Caco-2 (cell line): ENCODE measurements at regions of chr6 and their contacts with region 1.

Region 1: GRCh38 chr6:92122746-92123145 is 1296.6 kb downstream of the EPHA7 start:
- DNase-seq: no peak
- H3K4me3 ChIP-seq: no peak overlapping the region
- H3K4me3 Mint-ChIP-seq: no peak overlapping the region
- H3K27ac Mint-ChIP-seq: no peak overlapping the region
- H3K4me1 ChIP-seq: peaks cover 13% of the 10 kb centered on the region
- H3K4me1 Mint-ChIP-seq: peaks cover 12% of the 10 kb centered on the region
- H3K27me3 ChIP-seq: no peaks in the 10 kb centered on the region
- H3K27me3 Mint-ChIP-seq: peaks cover 3% of the 10 kb centered on the region
- CTCF ChIP-seq: peak; percentile 33 to 50

Region 2: DNA sequence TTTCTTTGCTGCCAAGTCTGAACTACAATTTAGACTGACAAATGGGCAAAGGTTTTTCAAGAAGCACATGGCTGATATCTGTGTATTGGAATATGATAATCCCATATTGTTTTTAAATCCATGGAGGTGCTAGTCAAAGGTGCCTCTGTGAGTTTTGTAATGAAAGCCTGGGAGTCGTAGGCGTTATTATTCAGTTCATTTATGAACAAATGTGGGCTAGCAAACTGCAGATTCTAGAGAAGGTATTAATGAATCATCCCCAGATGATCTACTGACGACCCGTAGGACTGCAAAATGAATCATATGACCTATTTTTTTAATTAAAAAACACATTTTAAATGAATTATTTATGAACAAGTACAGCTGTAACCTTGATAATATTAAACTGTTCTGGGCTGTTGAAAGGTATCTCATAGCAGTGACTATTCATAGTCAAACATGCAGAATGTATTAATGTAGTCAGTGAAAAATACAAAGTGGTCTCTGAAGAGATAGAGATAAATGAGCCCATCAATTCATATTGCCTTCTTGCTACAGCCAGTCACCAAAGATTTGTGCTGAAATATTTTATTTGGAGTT is 218.1 kb before region 1 on chr6:
- CTCF ChIA-PET with region 1: no interaction called
- POLR2A ChIA-PET with region 1: no interaction called
- intact Hi-C with region 1: no loop called
- DNase-seq: no peak
- H3K4me3 ChIP-seq: no peak overlapping the region
- H3K4me3 Mint-ChIP-seq: no peak overlapping the region
- H3K27ac Mint-ChIP-seq: no peak overlapping the region
- H3K4me1 ChIP-seq: no peaks in the 10 kb centered on the region
- H3K4me1 Mint-ChIP-seq: no peaks in the 10 kb centered on the region
- H3K27me3 ChIP-seq: no peaks in the 10 kb centered on the region
- H3K27me3 Mint-ChIP-seq: no peaks in the 10 kb centered on the region
- CTCF ChIP-seq: no peak

Region 3: DNA sequence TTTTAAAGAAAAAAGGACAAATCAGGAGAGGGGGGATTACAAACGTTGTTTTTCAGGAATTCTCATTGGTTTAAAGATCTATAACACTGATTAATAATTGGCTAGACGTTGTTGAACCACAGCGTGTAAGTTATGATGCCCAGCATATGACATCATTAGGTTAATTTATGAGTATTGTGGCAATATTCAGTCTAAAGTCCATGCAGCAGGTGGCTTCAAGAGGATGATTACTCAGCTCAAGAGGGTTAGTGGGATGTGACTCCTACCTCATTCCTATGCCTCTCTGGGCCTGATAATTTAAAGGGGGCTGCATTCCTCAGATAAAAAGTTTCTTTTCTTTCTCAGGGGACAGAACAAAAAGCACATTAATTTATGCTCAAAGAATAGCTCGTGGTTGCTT is 12.3 kb before region 1 on chr6:
- CTCF ChIA-PET with region 1: no interaction called
- POLR2A ChIA-PET with region 1: no interaction called
- intact Hi-C with region 1: loop called (anchors 1 kb)
- DNase-seq: no peak
- H3K4me3 ChIP-seq: no peak overlapping the region
- H3K4me3 Mint-ChIP-seq: no peak overlapping the region
- H3K27ac Mint-ChIP-seq: no peak overlapping the region
- H3K4me1 ChIP-seq: peaks cover 7% of the 10 kb centered on the region; the same call in 1 of the 2 replicates
- H3K4me1 Mint-ChIP-seq: no peaks in the 10 kb centered on the region
- H3K27me3 ChIP-seq: no peaks in the 10 kb centered on the region
- H3K27me3 Mint-ChIP-seq: no peaks in the 10 kb centered on the region
- CTCF ChIP-seq: no peak

Region 4: GRCh38 chr6:92159046-92159445 is 36.3 kb after region 1 on chr6:
- CTCF ChIA-PET with region 1: no interaction called
- POLR2A ChIA-PET with region 1: no interaction called
- intact Hi-C with region 1: loop called (anchors 2 kb)
- DNase-seq: no peak
- H3K4me3 ChIP-seq: no peak overlapping the region
- H3K4me3 Mint-ChIP-seq: no peak overlapping the region
- H3K27ac Mint-ChIP-seq: no peak overlapping the region
- H3K4me1 ChIP-seq: no peaks in the 10 kb centered on the region
- H3K4me1 Mint-ChIP-seq: no peaks in the 10 kb centered on the region
- H3K27me3 ChIP-seq: no peaks in the 10 kb centered on the region
- H3K27me3 Mint-ChIP-seq: peaks cover 2% of the 10 kb centered on the region
- CTCF ChIP-seq: peak; percentile 14 to 32

Region 5: GRCh38 chr6:92196325-92196724 is 73.6 kb after region 1 on chr6:
- CTCF ChIA-PET with region 1: no interaction called
- POLR2A ChIA-PET with region 1: no interaction called
- intact Hi-C with region 1: loop called (anchors 2 kb)
- DNase-seq: no peak
- H3K4me3 ChIP-seq: no peak overlapping the region
- H3K4me3 Mint-ChIP-seq: no peak overlapping the region
- H3K27ac Mint-ChIP-seq: no peak overlapping the region
- H3K4me1 ChIP-seq: no peaks in the 10 kb centered on the region
- H3K4me1 Mint-ChIP-seq: no peaks in the 10 kb centered on the region
- H3K27me3 ChIP-seq: no peaks in the 10 kb centered on the region
- H3K27me3 Mint-ChIP-seq: no peaks in the 10 kb centered on the region
- CTCF ChIP-seq: no peak

Region 6: DNA sequence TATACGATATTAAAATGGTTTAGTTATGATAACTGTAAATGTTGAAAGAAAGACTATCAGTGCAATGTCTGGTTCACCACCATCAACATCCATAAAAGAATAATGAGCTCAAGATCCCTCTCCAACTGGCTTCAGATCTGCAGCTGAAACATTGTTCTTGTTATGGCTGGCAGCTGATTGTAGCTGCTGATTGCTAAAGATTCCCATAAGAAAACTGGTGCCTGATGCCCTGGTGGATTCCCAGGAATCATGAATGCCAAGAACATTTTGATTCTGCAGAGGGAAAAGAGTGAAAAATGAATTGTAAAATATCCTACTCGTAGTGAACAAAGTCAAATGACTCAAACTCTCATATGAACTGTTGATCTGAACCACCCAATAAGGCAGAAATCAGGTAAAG is 136.4 kb after region 1 on chr6:
- CTCF ChIA-PET with region 1: no interaction called
- POLR2A ChIA-PET with region 1: no interaction called
- intact Hi-C with region 1: loop called (anchors 10 kb)
- DNase-seq: no peak
- H3K4me3 ChIP-seq: no peak overlapping the region
- H3K4me3 Mint-ChIP-seq: no peak overlapping the region
- H3K27ac Mint-ChIP-seq: no peak overlapping the region
- H3K4me1 ChIP-seq: no peaks in the 10 kb centered on the region
- H3K4me1 Mint-ChIP-seq: no peaks in the 10 kb centered on the region
- H3K27me3 ChIP-seq: no peaks in the 10 kb centered on the region
- H3K27me3 Mint-ChIP-seq: peaks cover 6% of the 10 kb centered on the region
- CTCF ChIP-seq: no peak

Region 7: GRCh38 chr6:92647625-92648024 is 524.9 kb after region 1 on chr6:
- CTCF ChIA-PET with region 1: no interaction called
- POLR2A ChIA-PET with region 1: no interaction called
- intact Hi-C with region 1: loop called (anchors 10 kb)
- DNase-seq: no peak
- H3K4me3 ChIP-seq: no peak overlapping the region
- H3K4me3 Mint-ChIP-seq: no peak overlapping the region
- H3K27ac Mint-ChIP-seq: no peak overlapping the region
- H3K4me1 ChIP-seq: no peaks in the 10 kb centered on the region
- H3K4me1 Mint-ChIP-seq: no peaks in the 10 kb centered on the region
- H3K27me3 ChIP-seq: no peaks in the 10 kb centered on the region
- H3K27me3 Mint-ChIP-seq: no peaks in the 10 kb centered on the region
- CTCF ChIP-seq: no peak

Region 8: DNA sequence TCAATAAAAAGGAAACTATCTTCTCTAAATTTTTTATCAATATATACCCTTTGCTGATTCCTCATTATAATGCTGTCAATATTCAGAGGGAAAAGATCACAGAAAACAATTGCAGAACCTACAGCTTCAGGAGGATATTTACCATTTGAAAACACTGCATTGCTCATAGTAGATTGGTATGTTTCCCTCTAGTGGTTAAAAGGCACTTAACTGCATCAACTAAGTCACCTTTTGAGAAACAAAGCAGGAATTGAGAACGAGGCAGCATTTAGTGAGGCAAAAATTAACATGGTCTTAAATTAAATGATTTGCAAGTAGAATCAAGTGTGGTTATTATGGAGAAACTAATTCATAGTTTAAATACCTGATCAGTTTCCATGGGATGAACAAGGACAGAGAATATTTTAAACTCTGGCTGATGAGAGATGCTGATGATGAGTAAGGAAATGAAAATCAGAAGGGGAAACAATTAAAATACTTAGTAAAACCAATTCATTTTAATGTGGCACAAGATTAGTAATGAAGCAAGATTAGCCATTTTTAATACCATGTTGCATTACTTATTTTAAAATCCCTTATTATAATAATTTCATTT is 654.5 kb after region 1 on chr6:
- CTCF ChIA-PET with region 1: no interaction called
- POLR2A ChIA-PET with region 1: no interaction called
- intact Hi-C with region 1: loop called (anchors 2 kb)
- DNase-seq: peak in 1 of 2 experiments; percentile 2
- H3K4me3 ChIP-seq: no peak overlapping the region
- H3K4me3 Mint-ChIP-seq: no peak overlapping the region
- H3K27ac Mint-ChIP-seq: no peak overlapping the region
- H3K4me1 ChIP-seq: no peaks in the 10 kb centered on the region
- H3K4me1 Mint-ChIP-seq: no peaks in the 10 kb centered on the region
- H3K27me3 ChIP-seq: no peaks in the 10 kb centered on the region
- H3K27me3 Mint-ChIP-seq: no peaks in the 10 kb centered on the region
- CTCF ChIP-seq: peak in 1 of 2 experiments; percentile 56